Endothelial cell of umbilical vein (primary cell): ENCODE measurements at regions of chr15 and their contacts with region 1.

Region 1: GRCh38 chr15:76190834-76191538 is 120.3 kb downstream of the ETFA start:
- DNase-seq: peak; percentile 68
- H3K4me3 ChIP-seq: no peak overlapping the region
- H3K27ac ChIP-seq: no peak overlapping the region
- H3K4me1 ChIP-seq: peaks cover 3% of the 10 kb centered on the region
- H3K27me3 ChIP-seq: peaks cover 0 to 2% of the 10 kb centered on the region in 2 experiments
- CTCF ChIP-seq: peak; percentile 84 to 95
- POLR2A ChIP-seq: no peak

Region 2: GRCh38 chr15:74531144-74531811 is 1659.7 kb before region 1 on chr15:
- CTCF ChIA-PET with region 1: no interaction called
- POLR2A ChIA-PET with region 1: no interaction called
- dilution Hi-C with region 1: no loop called
- intact Hi-C with region 1: no loop called
- DNase-seq: no peak
- H3K4me3 ChIP-seq: no peak overlapping the region
- H3K27ac ChIP-seq: no peak overlapping the region
- H3K4me1 ChIP-seq: peaks cover 2% of the 10 kb centered on the region
- H3K27me3 ChIP-seq: no peaks in the 10 kb centered on the region
- CTCF ChIP-seq: no peak
- POLR2A ChIP-seq: no peak

Region 3: DNA sequence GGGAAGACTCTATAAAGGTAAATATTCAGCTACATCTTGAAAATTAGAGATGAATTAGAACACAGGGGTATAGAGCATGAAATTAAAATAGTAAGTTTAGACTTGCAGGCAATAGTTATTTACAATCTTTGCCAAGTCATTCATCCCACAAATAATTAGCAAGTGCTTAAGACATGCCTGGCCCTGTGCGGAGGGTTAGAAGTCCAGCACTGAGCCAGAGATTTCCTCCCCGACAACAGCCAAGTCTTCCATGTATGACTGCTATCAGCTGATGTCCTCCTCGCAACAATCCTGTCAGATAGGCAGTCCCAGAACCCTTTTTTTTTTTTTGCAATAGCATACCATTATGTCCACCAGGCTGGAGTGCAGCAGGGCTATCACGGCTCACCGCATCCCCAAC is 754.1 kb before region 1 on chr15:
- CTCF ChIA-PET with region 1: no interaction called
- POLR2A ChIA-PET with region 1: no interaction called
- dilution Hi-C with region 1: no loop called
- intact Hi-C with region 1: no loop called
- DNase-seq: no peak
- H3K4me3 ChIP-seq: no peak overlapping the region
- H3K27ac ChIP-seq: no peak overlapping the region
- H3K4me1 ChIP-seq: peaks cover 5% of the 10 kb centered on the region
- H3K27me3 ChIP-seq: no peaks in the 10 kb centered on the region
- CTCF ChIP-seq: no peak
- POLR2A ChIP-seq: no peak

Region 4: DNA sequence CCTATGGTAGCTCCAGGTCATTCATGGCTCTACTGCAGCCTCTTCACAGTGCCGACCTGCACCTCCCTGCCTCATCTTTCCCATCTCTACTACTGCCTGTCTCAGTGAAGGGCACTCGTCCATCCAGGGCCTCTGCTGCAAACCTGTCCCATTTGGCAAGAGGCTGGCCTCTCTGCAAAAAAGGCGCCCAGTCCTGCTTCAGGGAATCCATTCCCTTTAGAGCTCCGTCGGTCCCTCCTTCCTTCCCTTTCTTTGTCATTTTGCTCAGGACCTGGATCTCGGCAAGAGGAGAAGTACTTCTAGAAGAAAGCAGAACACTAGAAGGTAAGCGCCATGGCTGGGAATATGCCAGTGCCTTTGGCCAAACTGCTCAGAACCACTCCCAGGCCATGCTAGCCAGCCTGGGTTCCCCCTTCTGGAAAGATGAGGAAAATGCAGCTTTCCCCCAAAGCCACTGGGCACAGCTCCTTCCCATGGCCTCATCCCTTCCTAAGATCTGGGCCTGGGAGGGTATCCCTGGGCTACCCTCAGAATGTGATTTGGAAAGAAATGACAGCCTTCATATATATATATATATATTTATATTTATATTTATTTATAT is 139.2 kb after region 1 on chr15:
- CTCF ChIA-PET with region 1: interaction called, 54 read pairs
- POLR2A ChIA-PET with region 1: no interaction called
- dilution Hi-C with region 1: no loop called
- intact Hi-C with region 1: loop called (anchors 1 kb)
- DNase-seq: peak; percentile 57
- H3K4me3 ChIP-seq: no peak overlapping the region
- H3K27ac ChIP-seq: no peak overlapping the region
- H3K4me1 ChIP-seq: no peaks in the 10 kb centered on the region
- H3K27me3 ChIP-seq: peaks cover 25 to 36% of the 10 kb centered on the region in 2 experiments
- CTCF ChIP-seq: peak; percentile 35 to 74
- POLR2A ChIP-seq: no peak

Region 5: GRCh38 chr15:76368122-76368589 is 177.2 kb after region 1 on chr15:
- CTCF ChIA-PET with region 1: no interaction called
- POLR2A ChIA-PET with region 1: no interaction called
- dilution Hi-C with region 1: no loop called
- intact Hi-C with region 1: no loop called
- DNase-seq: no peak
- H3K4me3 ChIP-seq: no peak overlapping the region
- H3K27ac ChIP-seq: no peak overlapping the region
- H3K4me1 ChIP-seq: no peaks in the 10 kb centered on the region
- H3K27me3 ChIP-seq: no peaks in the 10 kb centered on the region
- CTCF ChIP-seq: no peak
- POLR2A ChIP-seq: no peak

Region 6: DNA sequence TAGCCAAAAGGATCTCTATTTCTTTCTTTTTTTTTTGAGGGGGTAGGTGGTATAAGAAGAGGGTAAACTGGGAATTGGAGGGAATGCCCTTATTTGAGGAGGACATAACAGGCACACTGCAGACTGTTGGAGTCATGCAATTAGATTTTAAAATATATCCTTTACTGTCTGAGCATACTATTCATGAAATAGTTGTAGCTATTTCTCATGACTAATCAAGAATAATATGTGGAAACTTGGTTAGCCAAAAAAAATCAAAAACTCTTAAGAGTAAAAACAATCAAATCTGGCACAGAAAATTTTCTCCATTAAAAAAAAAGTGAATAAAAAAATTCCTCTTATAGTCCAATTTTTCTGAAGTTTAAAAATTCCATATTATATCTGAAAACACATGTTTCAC is 539.3 kb after region 1 on chr15:
- CTCF ChIA-PET with region 1: no interaction called
- POLR2A ChIA-PET with region 1: no interaction called
- dilution Hi-C with region 1: no loop called
- intact Hi-C with region 1: loop called (anchors 5 kb)
- DNase-seq: peak; percentile 39
- H3K4me3 ChIP-seq: no peak overlapping the region
- H3K27ac ChIP-seq: no peak overlapping the region
- H3K4me1 ChIP-seq: no peaks in the 10 kb centered on the region
- H3K27me3 ChIP-seq: no peaks in the 10 kb centered on the region
- CTCF ChIP-seq: no peak
- POLR2A ChIP-seq: no peak

Region 7: GRCh38 chr15:76866716-76867321 is 675.8 kb after region 1 on chr15:
- CTCF ChIA-PET with region 1: interaction called, 18 read pairs
- POLR2A ChIA-PET with region 1: no interaction called
- dilution Hi-C with region 1: no loop called
- intact Hi-C with region 1: loop called (anchors 1 kb)
- DNase-seq: peak; percentile 64
- H3K4me3 ChIP-seq: no peak overlapping the region
- H3K27ac ChIP-seq: no peak overlapping the region
- H3K4me1 ChIP-seq: no peaks in the 10 kb centered on the region
- H3K27me3 ChIP-seq: no peaks in the 10 kb centered on the region
- CTCF ChIP-seq: peak; percentile 15 to 33
- POLR2A ChIP-seq: no peak